ENCODE measurements at regions of chr11 and their contacts with region 1.

Region 1: GRCh38 chr11:92941676-92942571 is 27.5 kb upstream of the MTNR1B start:
- DNase-seq: peak; percentile 18
- H3K4me3 Mint-ChIP-seq: no peak overlapping the region
- H3K27ac Mint-ChIP-seq: no peak overlapping the region
- H3K4me1 Mint-ChIP-seq: no peaks in the 10 kb centered on the region
- H3K27me3 Mint-ChIP-seq: peaks cover 9% of the 10 kb centered on the region

Region 2: GRCh38 chr11:93063100-93063499 is 121.2 kb after region 1 on chr11:
- CTCF ChIA-PET with region 1: interaction called, 14 read pairs
- POLR2A ChIA-PET with region 1: no interaction called
- intact Hi-C with region 1: loop called (anchors 1 kb)
- DNase-seq: no peak
- H3K4me3 Mint-ChIP-seq: no peak overlapping the region
- H3K27ac Mint-ChIP-seq: no peak overlapping the region
- H3K4me1 Mint-ChIP-seq: no peaks in the 10 kb centered on the region
- H3K27me3 Mint-ChIP-seq: peaks cover 16% of the 10 kb centered on the region

Region 3: GRCh38 chr11:93225662-93226061 is 283.7 kb after region 1 on chr11:
- CTCF ChIA-PET with region 1: interaction called, 49 read pairs
- POLR2A ChIA-PET with region 1: no interaction called
- intact Hi-C with region 1: loop called (anchors 1 kb)
- DNase-seq: no peak
- H3K4me3 Mint-ChIP-seq: no peak overlapping the region
- H3K27ac Mint-ChIP-seq: no peak overlapping the region
- H3K4me1 Mint-ChIP-seq: no peaks in the 10 kb centered on the region
- H3K27me3 Mint-ChIP-seq: no peaks in the 10 kb centered on the region

Measured in activated CD4-positive, alpha-beta memory T cell treated with anti-CD3 and anti-CD28 coated beads for 36 hours (primary cell).